ENCODE measurements at regions of chr15 and their contacts with region 1.

Region 1: DNA sequence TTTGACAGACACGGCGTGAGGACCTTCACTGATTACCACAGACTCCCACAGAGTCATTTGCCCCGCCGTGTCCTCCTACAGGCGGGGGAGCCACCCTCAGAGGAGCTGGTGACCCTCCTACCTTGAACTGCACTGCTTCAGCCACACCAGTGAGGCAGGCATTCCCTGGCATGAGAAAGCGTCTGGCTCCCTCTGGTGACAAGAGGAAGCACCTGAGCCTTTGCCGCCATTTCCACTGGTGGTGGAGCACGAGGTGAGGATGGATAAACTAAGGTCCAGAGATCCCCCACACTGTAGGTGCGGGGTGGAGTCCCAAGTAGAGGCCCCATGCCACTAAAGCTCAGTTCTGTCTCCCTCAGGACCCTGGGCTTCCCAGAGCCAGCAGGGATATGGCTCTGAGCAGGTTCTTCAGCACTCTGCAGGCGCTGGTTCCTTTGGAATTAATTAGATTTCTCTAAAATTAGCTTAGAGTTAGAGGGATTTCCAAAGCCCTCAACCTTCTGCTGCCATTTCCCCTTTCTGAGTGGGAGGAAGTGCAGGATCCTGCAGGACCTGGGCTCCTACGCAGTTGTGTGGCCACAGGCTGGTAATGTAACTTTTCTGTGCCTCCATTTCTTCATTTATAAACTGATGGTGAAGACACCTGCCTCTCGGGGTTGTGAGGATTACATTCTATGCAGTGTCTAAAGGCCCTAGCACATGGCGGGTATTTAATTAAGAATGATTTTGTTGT is 224.0 kb downstream of the SLCO3A1 start:
- DNase-seq: peak; percentile 74
- H3K4me3 ChIP-seq: no peak overlapping the region; a peak in 1 of 4 replicates
- H3K27ac ChIP-seq: no peak overlapping the region
- H3K4me1 ChIP-seq: peaks cover 0 to 16% of the 10 kb centered on the region in 2 experiments; a peak in 2 of 4 replicates
- H3K27me3 ChIP-seq: no peaks in the 10 kb centered on the region
- CTCF ChIP-seq: peak; percentile 80
- EP300 ChIP-seq: no peak
- RAD21 ChIP-seq: peak; percentile 94

Region 2: GRCh38 chr15:91294795-91295194 is 782.7 kb before region 1 on chr15:
- CTCF ChIA-PET with region 1: interaction called, 17 read pairs
- POLR2A ChIA-PET with region 1: no interaction called
- DNase-seq: no peak
- H3K4me3 ChIP-seq: no peak overlapping the region
- H3K27ac ChIP-seq: no peak overlapping the region
- H3K4me1 ChIP-seq: no peaks in the 10 kb centered on the region
- H3K27me3 ChIP-seq: no peaks in the 10 kb centered on the region
- CTCF ChIP-seq: no peak
- EP300 ChIP-seq: no peak
- RAD21 ChIP-seq: no peak

Region 3: DNA sequence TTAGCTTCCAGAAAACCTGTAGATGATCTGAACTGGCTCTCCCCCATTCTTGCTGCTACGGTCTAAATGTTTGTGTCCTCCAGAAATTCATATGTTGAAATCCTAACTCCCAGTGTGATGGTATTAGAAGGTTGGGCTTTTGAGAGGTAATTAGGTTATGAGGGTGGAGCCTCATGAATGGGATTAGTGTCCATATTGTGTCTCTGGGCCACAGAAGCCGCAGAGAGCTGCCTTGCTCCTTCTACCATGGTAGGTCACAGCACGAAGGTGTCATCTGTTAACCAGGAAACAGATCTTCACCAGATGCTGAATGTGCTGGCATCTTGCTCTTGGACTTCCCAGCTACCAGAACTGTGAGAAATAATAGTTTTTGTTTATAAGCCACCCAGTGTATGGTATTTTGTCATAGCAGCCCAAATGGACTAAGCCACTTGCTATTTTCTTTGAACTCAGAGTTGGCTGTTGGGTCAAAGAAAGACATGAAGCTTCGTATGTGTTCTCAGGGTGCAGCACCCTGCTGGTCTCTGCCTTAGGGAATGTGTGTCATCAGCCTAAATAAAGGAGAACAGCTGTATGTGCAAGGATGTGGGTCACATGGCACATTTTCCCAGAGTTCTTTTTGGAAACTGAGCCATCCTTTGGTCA is 541.5 kb before region 1 on chr15:
- CTCF ChIA-PET with region 1: interaction called, 10 read pairs
- POLR2A ChIA-PET with region 1: no interaction called
- DNase-seq: no peak
- H3K4me3 ChIP-seq: no peak overlapping the region
- H3K27ac ChIP-seq: peak overlapping the region; percentile 69 to 78; a peak in 3 of 4 replicates
- H3K4me1 ChIP-seq: peaks cover 13 to 22% of the 10 kb centered on the region in 2 experiments
- H3K27me3 ChIP-seq: no peaks in the 10 kb centered on the region
- CTCF ChIP-seq: no peak
- EP300 ChIP-seq: no peak
- RAD21 ChIP-seq: no peak

Region 4: GRCh38 chr15:91890614-91891013 is 186.9 kb before region 1 on chr15:
- CTCF ChIA-PET with region 1: interaction called, 13 read pairs
- POLR2A ChIA-PET with region 1: no interaction called
- DNase-seq: no peak
- H3K4me3 ChIP-seq: no peak overlapping the region
- H3K27ac ChIP-seq: peak overlapping the region in 1 of 2 experiments; percentile 10; a peak in 2 of 4 replicates
- H3K4me1 ChIP-seq: peaks cover 4 to 20% of the 10 kb centered on the region in 2 experiments; a peak in 2 of 4 replicates
- H3K27me3 ChIP-seq: no peaks in the 10 kb centered on the region
- CTCF ChIP-seq: no peak
- EP300 ChIP-seq: no peak
- RAD21 ChIP-seq: no peak

Region 5: GRCh38 chr15:92091155-92091734 is 13.7 kb after region 1 on chr15:
- CTCF ChIA-PET with region 1: interaction called, 44 read pairs
- POLR2A ChIA-PET with region 1: no interaction called
- DNase-seq: peak; percentile 47
- H3K4me3 ChIP-seq: no peak overlapping the region
- H3K27ac ChIP-seq: no peak overlapping the region
- H3K4me1 ChIP-seq: no peaks in the 10 kb centered on the region; a peak in 1 of 4 replicates
- H3K27me3 ChIP-seq: no peaks in the 10 kb centered on the region
- CTCF ChIP-seq: peak; percentile 64
- EP300 ChIP-seq: no peak
- RAD21 ChIP-seq: peak; percentile 60

Region 6: GRCh38 chr15:92123962-92124656 is 46.6 kb after region 1 on chr15:
- CTCF ChIA-PET with region 1: no interaction called
- POLR2A ChIA-PET with region 1: no interaction called
- DNase-seq: no peak
- H3K4me3 ChIP-seq: no peak overlapping the region
- H3K27ac ChIP-seq: no peak overlapping the region
- H3K4me1 ChIP-seq: no peaks in the 10 kb centered on the region
- H3K27me3 ChIP-seq: no peaks in the 10 kb centered on the region
- CTCF ChIP-seq: no peak
- EP300 ChIP-seq: no peak
- RAD21 ChIP-seq: no peak

Region 7: GRCh38 chr15:92247649-92248242 is 170.2 kb after region 1 on chr15:
- CTCF ChIA-PET with region 1: no interaction called
- POLR2A ChIA-PET with region 1: no interaction called
- DNase-seq: no peak
- H3K4me3 ChIP-seq: no peak overlapping the region
- H3K27ac ChIP-seq: no peak overlapping the region
- H3K4me1 ChIP-seq: no peaks in the 10 kb centered on the region
- H3K27me3 ChIP-seq: no peaks in the 10 kb centered on the region
- CTCF ChIP-seq: no peak
- EP300 ChIP-seq: no peak
- RAD21 ChIP-seq: no peak

Region 8: GRCh38 chr15:92480381-92480780 is 402.9 kb after region 1 on chr15:
- CTCF ChIA-PET with region 1: no interaction called
- POLR2A ChIA-PET with region 1: no interaction called
- DNase-seq: no peak
- H3K4me3 ChIP-seq: no peak overlapping the region
- H3K27ac ChIP-seq: no peak overlapping the region
- H3K4me1 ChIP-seq: no peaks in the 10 kb centered on the region
- H3K27me3 ChIP-seq: no peaks in the 10 kb centered on the region
- CTCF ChIP-seq: no peak
- EP300 ChIP-seq: no peak
- RAD21 ChIP-seq: no peak

Region 9: GRCh38 chr15:92724144-92724543 is 646.6 kb after region 1 on chr15:
- CTCF ChIA-PET with region 1: no interaction called
- POLR2A ChIA-PET with region 1: no interaction called
- DNase-seq: no peak
- H3K4me3 ChIP-seq: no peak overlapping the region
- H3K27ac ChIP-seq: no peak overlapping the region
- H3K4me1 ChIP-seq: no peaks in the 10 kb centered on the region
- H3K27me3 ChIP-seq: no peaks in the 10 kb centered on the region
- CTCF ChIP-seq: no peak
- EP300 ChIP-seq: no peak
- RAD21 ChIP-seq: no peak

Measured in SK-N-SH (cell line).